ENCODE measurements at regions of chr3 and their contacts with region 1.

Region 1: GRCh38 chr3:152471814-152472671 is 203.3 kb downstream of the MBNL1 start:
- DNase-seq: peak; percentile 33
- ATAC-seq: peak; percentile 82
- H3K4me3 ChIP-seq: no peak overlapping the region
- H3K27ac ChIP-seq: no peak overlapping the region
- H3K4me1 ChIP-seq: no peaks in the 10 kb centered on the region
- H3K27me3 ChIP-seq: no peaks in the 10 kb centered on the region
- CTCF ChIP-seq: peak; percentile 42 to 64 (median 64); a peak in 5 of 6 replicates
- POLR2A ChIP-seq: no peak
- RAD21 ChIP-seq: peak; percentile 61

Region 2: DNA sequence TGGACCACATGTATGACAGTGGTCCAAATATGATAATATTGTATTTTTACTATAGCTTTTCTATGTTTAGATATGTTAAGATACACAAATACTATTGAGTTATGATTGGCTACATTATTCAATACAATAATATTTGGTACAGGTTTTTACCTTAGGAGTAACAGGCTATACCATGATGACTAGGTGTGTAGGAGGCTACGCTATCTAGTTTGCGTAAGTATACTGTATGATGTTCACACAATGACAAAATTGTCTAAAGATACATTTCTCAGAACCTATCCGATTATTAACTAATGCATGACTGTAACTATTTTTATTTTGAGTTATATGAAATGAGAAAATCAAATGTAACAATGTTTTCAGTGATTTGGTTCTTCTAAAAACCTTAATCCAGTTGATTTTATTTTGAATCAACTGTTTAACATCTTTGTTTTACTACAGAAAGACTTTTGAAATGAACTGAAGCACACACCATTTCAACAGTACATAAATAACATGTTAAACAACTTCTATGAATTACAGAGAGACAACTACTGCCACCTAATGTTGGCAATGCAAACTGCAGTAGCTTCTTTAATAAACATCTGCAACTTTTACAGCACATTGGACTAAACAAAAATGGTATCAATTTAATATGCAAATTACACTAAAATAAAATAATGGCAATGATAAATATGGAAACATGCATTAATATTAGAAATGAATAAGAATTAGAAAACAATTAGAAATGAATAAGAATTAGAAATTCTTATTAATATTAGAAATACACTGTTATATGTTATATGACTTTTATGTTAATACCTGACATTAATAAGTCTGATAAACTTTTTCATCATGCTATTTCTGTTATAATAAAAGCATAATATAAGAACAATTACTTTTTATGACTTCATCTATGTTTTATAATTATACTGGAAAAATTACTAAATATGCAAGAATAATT is 52.4 kb after region 1 on chr3:
- CTCF ChIA-PET with region 1: interaction called, 3 read pairs
- POLR2A ChIA-PET with region 1: no interaction called
- RAD21 ChIA-PET with region 1: no interaction called
- intact Hi-C with region 1: loop called (anchors 5 kb)
- DNase-seq: peak; percentile 33
- ATAC-seq: peak; percentile 55; the same call in 1 of the 2 replicates
- H3K4me3 ChIP-seq: no peak overlapping the region
- H3K27ac ChIP-seq: no peak overlapping the region
- H3K4me1 ChIP-seq: no peaks in the 10 kb centered on the region
- H3K27me3 ChIP-seq: no peaks in the 10 kb centered on the region
- CTCF ChIP-seq: peak; percentile 40 to 88 (median 69); a peak in 5 of 6 replicates
- POLR2A ChIP-seq: no peak
- RAD21 ChIP-seq: peak; percentile 67

Region 3: GRCh38 chr3:152574461-152575079 is 102.5 kb after region 1 on chr3:
- CTCF ChIA-PET with region 1: interaction called, 11 read pairs
- POLR2A ChIA-PET with region 1: no interaction called
- RAD21 ChIA-PET with region 1: no interaction called
- intact Hi-C with region 1: loop called (anchors 1 kb)
- DNase-seq: peak; percentile 38
- ATAC-seq: peak; percentile 83
- H3K4me3 ChIP-seq: no peak overlapping the region
- H3K27ac ChIP-seq: no peak overlapping the region
- H3K4me1 ChIP-seq: no peaks in the 10 kb centered on the region
- H3K27me3 ChIP-seq: no peaks in the 10 kb centered on the region
- CTCF ChIP-seq: peak; percentile 48 to 66 (median 65)
- POLR2A ChIP-seq: no peak
- RAD21 ChIP-seq: peak; percentile 81

Region 4: DNA sequence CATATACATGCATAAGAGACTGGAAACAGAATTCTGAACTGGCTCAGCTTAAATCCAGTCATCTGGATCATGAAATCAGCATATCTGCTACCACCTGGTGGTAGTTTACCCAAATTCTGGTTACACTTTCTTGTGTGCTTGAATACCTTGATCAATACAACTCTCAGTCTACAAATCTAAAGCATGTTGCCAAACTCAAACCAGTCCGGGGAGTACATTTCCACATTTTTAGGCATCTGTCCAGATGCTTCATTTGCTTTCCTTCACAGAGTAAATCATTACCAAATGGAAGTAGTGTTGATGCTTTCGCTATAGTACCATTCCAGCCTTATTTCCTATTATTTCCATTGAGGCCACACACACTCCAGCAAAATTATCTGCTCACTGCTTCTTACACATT is 489.3 kb after region 1 on chr3:
- CTCF ChIA-PET with region 1: interaction called, 4 read pairs
- POLR2A ChIA-PET with region 1: no interaction called
- RAD21 ChIA-PET with region 1: no interaction called
- intact Hi-C with region 1: loop called (anchors 1 kb)
- DNase-seq: peak; percentile 60
- ATAC-seq: peak; percentile 82
- H3K4me3 ChIP-seq: no peak overlapping the region
- H3K27ac ChIP-seq: no peak overlapping the region
- H3K4me1 ChIP-seq: peaks cover 5 to 14% of the 10 kb centered on the region in 2 experiments; a peak in 3 of 4 replicates
- H3K27me3 ChIP-seq: no peaks in the 10 kb centered on the region
- CTCF ChIP-seq: peak; percentile 48 to 68 (median 51)
- POLR2A ChIP-seq: no peak
- RAD21 ChIP-seq: peak; percentile 80

Measured in HCT116 (cell line).